GM12878 (cell line): ENCODE measurements at regions of chr19 and their contacts with region 1.

Region 1: DNA sequence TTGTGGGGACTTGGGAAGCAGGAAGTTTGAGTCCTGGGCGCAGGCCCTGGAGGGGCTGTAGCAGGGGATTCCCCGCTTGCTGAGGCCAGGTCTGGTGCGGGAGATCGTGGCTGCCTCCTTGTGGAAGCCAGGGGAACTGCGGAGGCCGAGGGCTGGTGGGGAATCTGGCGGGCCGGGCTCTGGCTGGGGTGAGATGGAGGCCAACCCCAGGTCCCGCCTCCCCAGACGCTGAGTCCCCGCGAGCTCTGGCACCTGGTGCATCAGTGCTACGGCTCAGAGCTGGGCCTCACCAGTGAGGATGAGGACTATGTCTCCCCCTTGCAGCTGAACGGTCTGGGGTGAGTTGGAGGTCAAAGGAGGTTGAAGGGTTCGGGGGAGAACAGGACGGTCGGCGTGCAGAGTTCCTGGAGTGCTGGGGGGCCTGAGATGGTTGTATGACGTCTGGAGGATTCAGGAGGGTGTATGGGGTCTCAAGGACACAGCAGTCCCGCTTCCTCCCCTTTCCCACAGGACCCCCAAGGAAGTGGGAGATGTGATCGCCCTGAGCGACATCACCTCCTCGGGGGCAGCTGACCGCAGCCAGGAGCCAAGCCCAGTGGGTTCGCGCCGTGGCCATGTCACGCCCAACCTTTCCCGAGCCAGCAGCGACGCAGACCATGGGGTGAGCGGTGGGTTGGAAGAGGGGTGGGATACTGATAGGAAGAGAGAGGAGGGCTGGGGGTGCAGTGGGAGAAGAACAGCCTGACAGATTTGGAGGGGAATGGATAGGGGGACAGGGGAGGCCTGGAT is 13.1 kb downstream of the GRAMD1A start:
- DNase-seq: no peak
- ATAC-seq: peak; percentile 93
- H3K4me3 ChIP-seq: no peak overlapping the region
- H3K27ac ChIP-seq: no peak overlapping the region
- H3K4me1 ChIP-seq: peaks cover 11% of the 10 kb centered on the region
- H3K27me3 ChIP-seq: no peaks in the 10 kb centered on the region
- CTCF ChIP-seq: peak; percentile 95 to 100 (median 97)
- EP300 ChIP-seq: no peak
- POLR2A ChIP-seq: peak; percentile 54
- RAD21 ChIP-seq: peak; percentile 94

Region 2: DNA sequence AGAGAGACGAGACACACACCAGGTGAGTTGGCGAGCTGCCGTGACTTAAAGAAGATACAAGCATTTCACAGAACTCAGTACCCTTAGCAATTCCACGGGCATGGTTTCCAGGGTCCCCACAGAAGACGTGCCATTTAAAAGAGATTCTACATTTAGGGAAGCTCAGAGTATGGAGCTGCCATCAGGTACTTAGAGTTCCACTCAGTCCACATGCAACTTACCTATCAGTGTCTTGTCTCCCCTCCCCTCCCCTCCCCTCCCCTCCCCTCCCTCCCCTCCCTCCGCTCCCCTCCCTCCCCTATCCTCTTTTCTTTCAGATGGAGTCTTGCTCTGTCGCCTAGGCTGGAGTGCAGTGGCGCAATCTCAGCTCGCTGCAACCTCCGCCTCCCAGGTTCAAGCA is 74.3 kb before region 1 on chr19:
- CTCF ChIA-PET with region 1: no interaction called
- POLR2A ChIA-PET with region 1: no interaction called
- RAD21 ChIA-PET with region 1: no interaction called
- SMC1A ChIA-PET with region 1: no interaction called
- in situ Hi-C with region 1: no loop called
- intact Hi-C with region 1: no loop called
- DNase-seq: no peak
- ATAC-seq: no peak
- H3K4me3 ChIP-seq: no peak overlapping the region
- H3K27ac ChIP-seq: no peak overlapping the region
- H3K4me1 ChIP-seq: no peaks in the 10 kb centered on the region
- H3K27me3 ChIP-seq: no peaks in the 10 kb centered on the region
- CTCF ChIP-seq: no peak
- EP300 ChIP-seq: no peak
- POLR2A ChIP-seq: no peak
- RAD21 ChIP-seq: no peak

Region 3: DNA sequence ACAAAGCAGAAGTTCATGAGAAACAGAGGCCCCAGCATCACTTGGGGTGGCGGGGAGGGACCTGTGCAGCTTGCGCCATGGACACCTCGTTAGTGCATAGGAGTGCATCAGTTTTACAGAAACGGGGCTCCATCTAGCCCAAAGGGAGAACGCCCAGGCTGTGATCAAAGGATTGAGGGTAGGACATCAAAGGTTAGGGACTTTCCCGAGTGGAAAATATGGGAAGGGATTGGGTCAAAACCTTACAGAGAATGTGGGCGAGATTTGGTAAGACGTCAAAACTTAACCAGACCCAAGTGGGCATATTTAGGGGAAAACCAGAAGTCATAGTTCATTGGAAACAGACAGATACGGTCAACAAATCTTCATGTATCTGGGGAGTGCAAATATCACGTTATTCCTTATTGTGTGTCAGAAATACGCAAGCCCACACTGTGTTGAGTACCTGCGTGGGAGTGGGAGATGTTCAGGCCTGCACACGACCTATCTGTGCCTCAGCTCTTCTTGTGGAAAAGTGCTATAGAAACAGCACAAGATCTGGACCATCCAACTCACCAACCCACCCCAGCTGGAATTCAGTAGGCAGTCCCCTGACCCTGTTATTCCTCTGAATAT is 22.5 kb before region 1 on chr19:
- CTCF ChIA-PET with region 1: interaction called, 10 read pairs
- POLR2A ChIA-PET with region 1: interaction called, 3 read pairs
- RAD21 ChIA-PET with region 1: interaction called, 13 read pairs
- SMC1A ChIA-PET with region 1: interaction called, 3 read pairs
- in situ Hi-C with region 1: no loop called
- intact Hi-C with region 1: no loop called
- DNase-seq: peak; percentile 69
- ATAC-seq: peak; percentile 80
- H3K4me3 ChIP-seq: no peak overlapping the region
- H3K27ac ChIP-seq: peak overlapping the region; percentile 57
- H3K4me1 ChIP-seq: peaks cover 4% of the 10 kb centered on the region; the same call in 1 of the 2 replicates
- H3K27me3 ChIP-seq: no peaks in the 10 kb centered on the region
- CTCF ChIP-seq: no peak
- EP300 ChIP-seq: peak; percentile 64 to 79; a peak in 2 of 4 replicates
- POLR2A ChIP-seq: no peak
- RAD21 ChIP-seq: no peak

Region 4: GRCh38 chr19:34999498-35000341 is 13.5 kb before region 1 on chr19 and contains the start of gene GRAMD1A:
- CTCF ChIA-PET with region 1: interaction called, 11 read pairs
- POLR2A ChIA-PET with region 1: no interaction called
- RAD21 ChIA-PET with region 1: no interaction called
- SMC1A ChIA-PET with region 1: no interaction called
- in situ Hi-C with region 1: no loop called
- intact Hi-C with region 1: no loop called
- DNase-seq: no peak
- ATAC-seq: peak; percentile 72
- H3K4me3 ChIP-seq: peak within 1 kb of the TSS; percentile 95
- H3K27ac ChIP-seq: peak within 1 kb of the TSS; percentile 86
- H3K4me1 ChIP-seq: peaks cover 43% of the 10 kb centered on the region
- H3K27me3 ChIP-seq: no peaks in the 10 kb centered on the region
- CTCF ChIP-seq: no peak
- EP300 ChIP-seq: peak in 1 of 2 experiments; percentile 21; a peak in 1 of 4 replicates
- POLR2A ChIP-seq: no peak
- RAD21 ChIP-seq: no peak
- polyA plus RNA-seq, gene GRAMD1A: 0.79 to 2.0 TPM

Region 5: GRCh38 chr19:35154525-35155406 is 141.5 kb after region 1 on chr19 and contains the start of gene FXYD5:
- CTCF ChIA-PET with region 1: no interaction called
- POLR2A ChIA-PET with region 1: no interaction called
- RAD21 ChIA-PET with region 1: no interaction called
- SMC1A ChIA-PET with region 1: no interaction called
- in situ Hi-C with region 1: no loop called
- intact Hi-C with region 1: no loop called
- DNase-seq: no peak
- ATAC-seq: peak; percentile 86
- H3K4me3 ChIP-seq: peak within 1 kb of the TSS; percentile 98
- H3K27ac ChIP-seq: peak within 1 kb of the TSS; percentile 34
- H3K4me1 ChIP-seq: peaks cover 6% of the 10 kb centered on the region
- H3K27me3 ChIP-seq: peaks cover 0 to 3% of the 10 kb centered on the region in 2 experiments; a peak in 1 of 4 replicates
- CTCF ChIP-seq: no peak
- EP300 ChIP-seq: no peak
- POLR2A ChIP-seq: peak; percentile 74
- RAD21 ChIP-seq: no peak
- polyA plus RNA-seq, gene FXYD5: 30.0 to 50.9 TPM

Region 6: GRCh38 chr19:35332817-35333216 is 319.6 kb after region 1 on chr19:
- CTCF ChIA-PET with region 1: no interaction called
- POLR2A ChIA-PET with region 1: no interaction called
- RAD21 ChIA-PET with region 1: no interaction called
- SMC1A ChIA-PET with region 1: no interaction called
- in situ Hi-C with region 1: no loop called
- intact Hi-C with region 1: no loop called
- DNase-seq: no peak
- ATAC-seq: peak; percentile 47
- H3K4me3 ChIP-seq: peak overlapping the region; percentile 72
- H3K27ac ChIP-seq: peak overlapping the region; percentile 93
- H3K4me1 ChIP-seq: peaks cover 51% of the 10 kb centered on the region
- H3K27me3 ChIP-seq: no peaks in the 10 kb centered on the region
- CTCF ChIP-seq: peak in 2 of 3 experiments; percentile 1 to 31; a peak in 2 of 6 replicates
- EP300 ChIP-seq: no peak
- POLR2A ChIP-seq: peak; percentile 81
- RAD21 ChIP-seq: peak; percentile 17; the same call in 1 of the 2 replicates